MCF 10A (cell line): ENCODE measurements at regions of chr15 and their contacts with region 1.

Region 1: DNA sequence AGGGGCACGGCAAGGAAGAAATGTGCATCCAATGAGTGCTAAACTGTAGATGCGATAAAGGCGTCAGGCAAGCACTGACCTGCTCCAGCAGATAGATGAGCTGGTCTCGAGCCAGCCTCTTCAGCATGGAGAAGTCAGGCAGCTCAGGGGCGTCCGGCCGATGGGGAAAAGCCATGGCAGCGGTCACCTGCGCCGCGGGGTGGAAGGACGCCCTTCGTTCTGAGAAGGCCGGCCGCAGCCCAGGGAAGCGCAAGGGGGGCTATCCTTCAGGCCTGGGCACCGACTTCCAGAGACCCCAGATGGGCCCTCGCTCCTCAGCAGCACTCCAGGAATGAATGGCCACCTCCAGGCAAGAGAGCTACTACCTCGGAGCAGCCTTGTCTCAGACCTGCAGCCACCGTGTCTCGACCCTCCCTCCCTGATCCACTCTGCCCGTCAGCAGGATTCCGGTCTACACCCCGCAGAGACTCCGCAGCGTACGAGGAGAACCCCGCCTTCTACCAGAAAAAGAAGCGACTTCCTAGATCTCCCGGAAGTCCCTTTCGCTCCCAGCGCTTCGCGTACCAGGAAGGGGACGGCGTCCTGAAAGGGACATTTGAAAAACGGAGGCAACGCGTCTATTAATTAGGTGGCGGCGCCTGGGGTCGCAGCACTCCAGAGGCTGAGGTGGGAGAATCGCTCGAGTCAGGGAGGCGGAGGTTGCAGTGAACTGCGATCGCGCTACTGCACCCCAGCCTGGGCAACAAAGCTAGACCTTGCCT is at the start of gene VPS33B:
- DNase-seq: peak; percentile 87
- H3K4me3 Mint-ChIP-seq: peak within 1 kb of the TSS; percentile 83
- H3K27ac Mint-ChIP-seq: peak within 1 kb of the TSS; percentile 83
- H3K4me1 Mint-ChIP-seq: peaks cover 18% of the 10 kb centered on the region
- H3K27me3 Mint-ChIP-seq: no peaks in the 10 kb centered on the region
- CTCF ChIP-seq: no peak
- total RNA-seq, gene VPS33B: 11.7 and 12.6 TPM in 2 replicates

Region 2: GRCh38 chr15:90982135-90982534 is 40.1 kb before region 1 on chr15:
- CTCF ChIA-PET with region 1: interaction called, 7 read pairs
- POLR2A ChIA-PET with region 1: interaction called, 11 read pairs
- intact Hi-C with region 1: no loop called
- DNase-seq: peak; percentile 44
- H3K4me3 Mint-ChIP-seq: no peak overlapping the region
- H3K27ac Mint-ChIP-seq: peak overlapping the region; percentile 53
- H3K4me1 Mint-ChIP-seq: peaks cover 5% of the 10 kb centered on the region
- H3K27me3 Mint-ChIP-seq: no peaks in the 10 kb centered on the region
- CTCF ChIP-seq: no peak

Region 3: DNA sequence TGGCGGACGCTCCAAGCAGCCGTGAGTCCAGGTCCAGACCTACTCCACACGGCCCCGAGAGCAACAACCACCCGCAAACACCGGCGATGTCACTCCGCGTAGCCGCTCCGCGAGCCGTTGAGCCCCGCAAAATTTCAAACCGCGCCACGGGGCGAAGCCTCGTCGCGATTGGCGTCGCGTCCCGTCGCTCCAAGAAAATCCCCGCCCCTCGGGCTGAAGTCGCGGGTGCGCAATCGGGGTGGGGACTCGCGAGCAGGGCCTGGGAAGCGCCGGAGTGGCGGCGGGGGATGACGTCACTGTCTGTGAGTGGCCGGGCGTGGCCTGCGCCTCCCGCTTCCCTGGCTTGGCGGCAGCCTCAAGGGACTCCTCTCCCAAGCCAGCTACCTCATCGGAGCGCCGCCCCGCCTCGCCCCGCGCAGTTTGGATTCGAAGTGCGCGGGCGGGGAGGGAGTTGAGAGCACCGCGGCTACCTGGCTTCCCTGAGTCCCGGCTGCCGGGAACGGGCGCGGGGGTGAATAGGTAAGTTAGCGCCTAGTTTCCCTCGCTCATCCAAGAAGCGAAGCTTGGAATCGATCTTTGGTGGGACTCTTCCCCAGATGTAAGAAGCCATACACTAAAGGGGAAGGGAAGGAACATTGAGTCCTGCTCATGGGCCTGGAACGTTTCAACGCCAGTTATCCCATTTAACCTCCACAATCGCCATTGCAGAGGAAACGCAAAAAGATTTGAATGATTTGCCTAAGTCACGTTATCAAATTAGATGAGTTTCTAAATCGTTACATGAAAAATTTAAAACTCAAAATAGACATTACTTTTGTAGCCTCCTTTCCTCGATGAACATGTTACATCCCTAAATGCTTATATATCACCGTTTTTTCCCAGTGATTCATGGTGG is 27.6 kb before region 1 on chr15 and contains the start of gene PRC1:
- CTCF ChIA-PET with region 1: interaction called, 4 read pairs
- POLR2A ChIA-PET with region 1: interaction called, 27 read pairs
- intact Hi-C with region 1: no loop called
- DNase-seq: peak; percentile 99
- H3K4me3 Mint-ChIP-seq: peak within 1 kb of the TSS; percentile 88
- H3K27ac Mint-ChIP-seq: peak within 1 kb of the TSS; percentile 98
- H3K4me1 Mint-ChIP-seq: peaks cover 9% of the 10 kb centered on the region
- H3K27me3 Mint-ChIP-seq: no peaks in the 10 kb centered on the region
- CTCF ChIP-seq: no peak
- total RNA-seq, gene PRC1: 83.1 and 125 TPM in 2 replicates

Region 4: GRCh38 chr15:91032919-91033803 is 10.9 kb after region 1 on chr15:
- CTCF ChIA-PET with region 1: interaction called, 16 read pairs
- POLR2A ChIA-PET with region 1: interaction called, 4 read pairs
- intact Hi-C with region 1: no loop called
- DNase-seq: peak; percentile 80
- H3K4me3 Mint-ChIP-seq: no peak overlapping the region
- H3K27ac Mint-ChIP-seq: no peak overlapping the region
- H3K4me1 Mint-ChIP-seq: no peaks in the 10 kb centered on the region
- H3K27me3 Mint-ChIP-seq: peaks cover 26% of the 10 kb centered on the region
- CTCF ChIP-seq: peak; percentile 80